ENCODE measurements at regions of chr16 and their contacts with region 1.

Region 1: GRCh38 chr16:56866943-56867830 is 2.2 kb downstream of the SLC12A3 start:
- DNase-seq: peak; percentile 72
- CTCF ChIP-seq: peak; percentile 59

Region 2: GRCh38 chr16:56558024-56558747 is 309.0 kb before region 1 on chr16:
- CTCF ChIA-PET with region 1: no interaction called
- POLR2A ChIA-PET with region 1: no interaction called
- DNase-seq: no peak
- CTCF ChIP-seq: no peak

Region 3: GRCh38 chr16:56771558-56772279 is 95.5 kb before region 1 on chr16:
- CTCF ChIA-PET with region 1: no interaction called
- POLR2A ChIA-PET with region 1: no interaction called
- DNase-seq: no peak
- CTCF ChIP-seq: no peak

Region 4: DNA sequence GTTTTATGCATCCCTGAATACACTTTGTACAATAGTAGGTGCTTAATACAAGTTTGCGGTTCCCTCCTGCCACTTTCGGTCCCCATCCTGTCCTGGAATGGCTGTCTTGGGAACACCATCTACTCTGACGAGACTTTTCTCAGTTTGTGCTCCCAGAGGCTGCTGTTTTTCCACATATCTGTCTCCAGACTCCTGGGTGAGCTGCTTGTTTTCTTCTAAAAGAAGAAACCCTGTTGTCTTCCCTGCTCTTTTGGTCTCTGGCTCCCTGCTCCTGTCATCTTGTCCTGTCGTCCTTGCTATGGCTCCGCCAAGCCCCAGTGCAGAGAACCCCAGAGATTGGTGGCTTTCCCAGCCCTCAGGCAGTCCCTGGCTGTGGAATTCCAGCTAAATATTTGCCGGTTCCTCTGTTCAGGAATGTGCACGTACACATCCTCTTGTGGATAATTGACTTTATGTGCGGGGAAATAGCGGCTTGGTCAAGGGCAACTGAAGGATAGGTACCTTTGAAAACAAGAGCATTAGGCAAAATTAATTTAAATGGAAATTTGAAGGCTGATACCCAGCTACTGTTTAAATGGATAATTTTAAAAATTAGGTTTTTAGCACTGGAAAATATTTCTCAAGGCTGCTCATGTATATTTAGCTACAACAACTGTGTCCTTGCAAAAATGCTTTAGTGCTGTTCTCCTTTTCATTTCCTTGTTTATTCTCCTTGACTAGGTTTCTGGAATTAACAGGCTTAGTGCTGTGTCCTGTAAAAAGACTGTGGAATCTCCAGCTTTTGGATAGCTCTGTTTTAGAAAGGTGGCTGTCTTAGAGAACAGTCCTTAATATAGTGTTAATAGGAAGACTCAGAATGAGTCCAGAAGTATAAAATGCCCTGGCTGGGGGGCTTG is 52.4 kb before region 1 on chr16:
- CTCF ChIA-PET with region 1: interaction called, 11 read pairs
- POLR2A ChIA-PET with region 1: no interaction called
- DNase-seq: no peak
- CTCF ChIP-seq: no peak

Region 5: DNA sequence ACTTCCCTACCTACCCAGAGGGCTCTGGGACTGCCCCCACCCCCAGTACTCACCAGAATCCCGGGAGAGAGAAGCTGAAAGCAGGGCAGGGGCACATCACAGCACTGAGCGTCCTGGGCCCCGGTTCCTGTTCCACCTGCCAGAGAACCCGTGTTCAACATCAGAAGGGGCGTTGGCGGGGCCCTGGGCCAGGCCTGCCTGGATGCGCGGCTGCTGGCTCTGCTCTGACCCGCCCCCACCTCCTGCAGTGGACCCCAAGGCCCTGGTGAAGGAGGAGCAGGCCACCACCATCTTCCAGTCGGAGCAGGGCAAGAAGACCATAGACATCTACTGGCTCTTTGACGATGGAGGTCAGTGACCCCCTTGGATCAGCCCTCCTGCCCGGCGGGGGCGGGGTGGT is 25.5 kb after region 1 on chr16:
- CTCF ChIA-PET with region 1: interaction called, 10 read pairs
- POLR2A ChIA-PET with region 1: no interaction called
- DNase-seq: no peak
- CTCF ChIP-seq: no peak

Region 6: DNA sequence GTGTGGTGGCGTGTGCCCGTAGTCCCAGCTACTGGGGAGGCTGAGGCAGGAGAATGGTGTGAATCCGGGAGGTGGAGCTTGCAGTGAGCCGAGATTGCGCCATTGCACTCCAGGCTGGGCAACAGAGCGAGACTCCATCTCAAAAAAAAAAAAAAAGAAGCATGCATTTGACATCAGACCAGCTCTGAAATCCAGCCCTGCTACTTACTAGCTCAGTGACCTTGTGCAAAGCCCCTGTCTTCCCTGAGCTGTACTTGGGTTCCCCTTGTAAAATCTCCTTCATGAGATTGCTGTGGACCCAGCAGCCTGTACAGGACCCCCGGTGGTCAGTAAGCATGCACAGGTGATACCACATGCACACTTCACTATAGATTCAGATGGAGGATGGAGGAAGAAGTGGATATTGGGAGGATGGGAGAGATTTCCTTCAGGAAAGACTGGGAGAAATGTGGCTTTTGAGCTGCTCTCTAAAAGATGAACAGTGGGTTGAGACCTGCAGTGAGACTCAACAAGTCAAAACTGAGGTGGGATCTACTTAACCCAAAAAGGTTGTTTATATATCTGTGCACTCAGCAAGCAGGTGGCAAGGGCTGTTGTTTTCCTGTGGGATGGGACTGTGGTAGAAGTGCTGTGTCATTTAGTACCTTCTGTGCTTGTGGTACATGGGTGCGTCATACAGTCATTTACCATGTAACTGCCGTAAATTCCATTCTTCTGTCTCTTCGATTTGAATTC is 71.4 kb after region 1 on chr16:
- CTCF ChIA-PET with region 1: interaction called, 11 read pairs
- POLR2A ChIA-PET with region 1: interaction called, 3 read pairs
- DNase-seq: no peak
- CTCF ChIP-seq: no peak

Region 7: GRCh38 chr16:56950881-56951771 is 83.9 kb after region 1 on chr16:
- CTCF ChIA-PET with region 1: interaction called, 54 read pairs
- POLR2A ChIA-PET with region 1: no interaction called
- DNase-seq: peak; percentile 78
- CTCF ChIP-seq: peak; percentile 75

Region 8: GRCh38 chr16:57061084-57061905 is 194.1 kb after region 1 on chr16:
- CTCF ChIA-PET with region 1: no interaction called
- POLR2A ChIA-PET with region 1: no interaction called
- DNase-seq: no peak
- CTCF ChIP-seq: no peak

Measured in GM10248 (cell line).